AG04450 (cell line): ENCODE measurements at regions of chr1 and their contacts with region 1.

Region 1: GRCh38 chr1:28602536-28603439 is 10.7 kb downstream of the RAB42 start:
- DNase-seq: peak; percentile 55
- H3K4me3 ChIP-seq: no peak overlapping the region
- H3K27ac ChIP-seq: peak overlapping the region; percentile 85
- H3K27me3 ChIP-seq: no peaks in the 10 kb centered on the region
- CTCF ChIP-seq: peak; percentile 83

Region 2: GRCh38 chr1:28359592-28360239 is 243.1 kb before region 1 on chr1:
- CTCF ChIA-PET with region 1: interaction called, 50 read pairs
- POLR2A ChIA-PET with region 1: no interaction called
- DNase-seq: no peak
- H3K4me3 ChIP-seq: no peak overlapping the region
- H3K27ac ChIP-seq: no peak overlapping the region
- H3K27me3 ChIP-seq: no peaks in the 10 kb centered on the region
- CTCF ChIP-seq: peak; percentile 73

Region 3: GRCh38 chr1:28412731-28413130 is 190.1 kb before region 1 on chr1:
- CTCF ChIA-PET with region 1: interaction called, 26 read pairs
- POLR2A ChIA-PET with region 1: no interaction called
- DNase-seq: no peak
- H3K4me3 ChIP-seq: no peak overlapping the region
- H3K27ac ChIP-seq: no peak overlapping the region
- H3K27me3 ChIP-seq: no peaks in the 10 kb centered on the region
- CTCF ChIP-seq: no peak

Region 4: DNA sequence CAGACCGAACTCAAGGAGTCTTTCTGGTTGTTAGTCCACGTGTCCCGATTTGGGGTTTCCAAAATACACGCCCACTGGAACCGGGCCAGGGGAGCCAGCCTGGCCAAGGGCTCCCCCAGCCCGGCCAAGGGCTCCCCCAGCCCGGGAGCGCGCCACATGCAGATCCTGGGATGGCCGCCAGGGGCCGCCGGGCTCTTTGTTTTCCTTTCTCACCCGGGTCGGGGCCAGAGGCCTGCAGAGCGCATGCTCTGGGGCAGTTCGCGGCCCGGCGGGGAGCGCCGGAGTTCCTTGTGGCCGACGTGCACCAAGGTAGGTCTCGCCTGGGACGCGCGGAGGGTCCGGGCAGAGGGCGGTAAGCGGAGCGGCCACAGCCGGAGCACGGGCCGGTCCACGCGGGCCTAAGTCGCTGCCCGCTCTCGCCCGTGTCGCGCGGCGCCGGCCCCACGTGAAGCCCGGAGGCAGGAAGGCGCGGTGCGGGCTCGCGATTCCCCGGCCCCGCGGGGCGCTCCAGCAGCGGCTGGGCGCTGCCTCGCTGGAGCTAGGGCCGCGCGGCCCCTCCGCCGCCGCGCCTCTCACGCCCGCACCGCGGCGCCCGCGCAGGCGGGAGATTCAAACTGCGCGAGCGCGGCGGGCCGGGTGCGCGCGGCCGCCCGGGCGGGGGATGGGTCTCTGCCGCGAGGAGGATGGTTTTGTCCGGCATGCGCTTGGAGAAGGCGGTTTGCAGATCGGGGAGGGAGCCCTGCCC is 84.6 kb before region 1 on chr1:
- CTCF ChIA-PET with region 1: interaction called, 57 read pairs
- POLR2A ChIA-PET with region 1: interaction called, 46 read pairs
- DNase-seq: peak; percentile 60
- H3K4me3 ChIP-seq: peak overlapping the region; percentile 81
- H3K27ac ChIP-seq: peak overlapping the region; percentile 61
- H3K27me3 ChIP-seq: no peaks in the 10 kb centered on the region
- CTCF ChIP-seq: peak; percentile 92

Region 5: DNA sequence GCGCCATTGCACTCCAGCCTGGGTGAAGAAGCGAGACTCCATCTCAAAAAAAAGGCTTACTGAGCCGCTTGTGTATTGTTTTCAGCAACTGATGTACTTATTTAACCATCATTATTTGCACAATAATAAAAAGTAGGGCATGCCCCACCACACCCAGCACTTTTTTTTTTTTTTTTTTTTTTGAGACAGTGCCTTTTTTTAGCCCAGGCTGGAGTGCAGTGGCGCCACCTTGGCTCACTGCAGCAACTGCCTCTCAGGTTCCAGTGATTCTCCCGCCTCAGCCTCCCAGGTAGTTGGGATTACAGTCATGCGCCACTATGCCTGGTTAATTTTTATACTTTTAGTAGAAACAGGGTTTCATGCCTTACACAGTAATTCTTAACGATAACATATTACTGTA is 62.1 kb before region 1 on chr1:
- CTCF ChIA-PET with region 1: no interaction called
- POLR2A ChIA-PET with region 1: no interaction called
- DNase-seq: no peak
- H3K4me3 ChIP-seq: no peak overlapping the region
- H3K27ac ChIP-seq: no peak overlapping the region
- H3K27me3 ChIP-seq: no peaks in the 10 kb centered on the region
- CTCF ChIP-seq: 0 out of 2 replicates have a peak, but pooled peaks have one; percentile 9

Region 6: GRCh38 chr1:28642847-28643635 is 40.3 kb after region 1 on chr1 and contains the start of gene TAF12:
- CTCF ChIA-PET with region 1: no interaction called
- POLR2A ChIA-PET with region 1: interaction called, 18 read pairs
- DNase-seq: peak; percentile 86
- H3K4me3 ChIP-seq: peak within 1 kb of the TSS; percentile 98
- H3K27ac ChIP-seq: peak within 1 kb of the TSS; percentile 89
- H3K27me3 ChIP-seq: no peaks in the 10 kb centered on the region
- CTCF ChIP-seq: peak; percentile 30; the same call in 1 of the 2 replicates
- polyA plus RNA-seq, gene TAF12: 50.2 and 54.2 TPM in 2 replicates